ENCODE measurements at regions of chr10 and their contacts with region 1.

Region 1: GRCh38 chr10:74081192-74081803 is 69.3 kb downstream of the AP3M1 start:
- DNase-seq: peak in 1 of 2 experiments; percentile 46
- H3K4me3 ChIP-seq: no peak overlapping the region
- H3K27ac ChIP-seq: peak overlapping the region; percentile 66; the same call in 1 of the 2 replicates
- H3K4me1 ChIP-seq: peaks cover 43% of the 10 kb centered on the region
- H3K27me3 ChIP-seq: no peaks in the 10 kb centered on the region
- CTCF ChIP-seq: peak; percentile 87

Region 2: DNA sequence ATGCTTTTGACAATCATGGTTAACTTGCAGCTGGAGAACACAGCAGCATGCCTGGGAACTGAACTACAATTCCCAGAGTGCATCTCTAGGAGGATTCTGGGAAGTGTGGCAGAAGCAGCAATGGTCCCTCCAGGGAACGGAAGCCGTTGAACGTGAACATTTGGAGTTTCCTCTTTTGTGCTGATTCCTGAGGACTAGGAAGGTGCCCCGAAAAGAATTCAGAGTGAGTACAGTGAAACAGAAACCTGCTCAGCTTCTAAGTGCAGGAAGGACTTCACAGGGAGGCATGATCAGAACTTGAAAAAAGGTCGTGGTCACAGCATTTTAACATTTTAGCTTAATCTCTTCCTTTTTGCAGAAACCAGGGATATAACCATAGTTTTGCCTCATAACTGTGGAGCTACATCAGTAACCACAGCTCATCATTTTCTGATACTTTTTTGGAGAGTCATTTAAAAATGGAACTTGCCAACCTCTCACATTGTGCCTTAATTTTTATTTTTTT is 970.9 kb before region 1 on chr10 and contains the start of gene NUDT13:
- CTCF ChIA-PET with region 1: no interaction called
- POLR2A ChIA-PET with region 1: no interaction called
- intact Hi-C with region 1: no loop called
- DNase-seq: peak; percentile 51 to 54
- H3K4me3 ChIP-seq: peak within 1 kb of the TSS; percentile 59
- H3K27ac ChIP-seq: peak within 1 kb of the TSS; percentile 91
- H3K4me1 ChIP-seq: peaks cover 19% of the 10 kb centered on the region
- H3K27me3 ChIP-seq: no peaks in the 10 kb centered on the region
- CTCF ChIP-seq: no peak
- total RNA-seq, gene NUDT13: 5.2 TPM in 2 replicates

Region 3: DNA sequence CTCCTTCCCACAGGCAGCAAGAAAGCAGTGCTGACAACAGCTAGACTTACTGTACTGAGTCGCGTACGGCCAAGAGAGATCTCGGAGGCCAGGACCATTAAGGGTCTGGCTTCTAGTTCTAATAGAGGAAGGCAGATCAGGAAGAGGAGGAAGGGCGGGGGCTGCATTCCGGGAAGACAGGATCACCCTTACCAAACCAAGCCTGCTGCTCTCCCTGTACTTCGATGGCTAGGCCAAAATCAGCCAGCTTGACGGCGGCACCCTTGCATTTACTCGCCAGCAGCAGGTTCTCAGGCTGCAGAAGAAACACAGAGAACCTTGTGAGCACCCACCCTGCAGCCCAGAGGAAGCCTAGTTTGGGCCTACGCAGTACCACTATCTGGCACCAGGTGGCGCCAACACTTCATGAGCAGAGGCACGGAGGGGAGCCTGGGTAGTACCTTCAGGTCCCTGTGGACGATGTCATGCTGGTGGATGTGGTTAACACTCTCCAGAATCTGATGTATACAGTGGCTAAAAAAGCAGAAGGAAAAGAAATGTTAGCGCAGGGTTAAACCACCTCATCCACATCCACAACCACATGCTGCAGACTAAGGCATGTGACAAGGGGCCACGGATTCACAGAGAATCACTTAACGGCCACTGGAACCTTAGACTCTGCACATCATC is 232.3 kb before region 1 on chr10:
- CTCF ChIA-PET with region 1: no interaction called
- POLR2A ChIA-PET with region 1: interaction called, 37 read pairs
- intact Hi-C with region 1: no loop called
- DNase-seq: peak; percentile 66 to 82
- H3K4me3 ChIP-seq: no peak overlapping the region
- H3K27ac ChIP-seq: no peak overlapping the region
- H3K4me1 ChIP-seq: no peaks in the 10 kb centered on the region
- H3K27me3 ChIP-seq: no peaks in the 10 kb centered on the region
- CTCF ChIP-seq: peak; percentile 100

Region 4: DNA sequence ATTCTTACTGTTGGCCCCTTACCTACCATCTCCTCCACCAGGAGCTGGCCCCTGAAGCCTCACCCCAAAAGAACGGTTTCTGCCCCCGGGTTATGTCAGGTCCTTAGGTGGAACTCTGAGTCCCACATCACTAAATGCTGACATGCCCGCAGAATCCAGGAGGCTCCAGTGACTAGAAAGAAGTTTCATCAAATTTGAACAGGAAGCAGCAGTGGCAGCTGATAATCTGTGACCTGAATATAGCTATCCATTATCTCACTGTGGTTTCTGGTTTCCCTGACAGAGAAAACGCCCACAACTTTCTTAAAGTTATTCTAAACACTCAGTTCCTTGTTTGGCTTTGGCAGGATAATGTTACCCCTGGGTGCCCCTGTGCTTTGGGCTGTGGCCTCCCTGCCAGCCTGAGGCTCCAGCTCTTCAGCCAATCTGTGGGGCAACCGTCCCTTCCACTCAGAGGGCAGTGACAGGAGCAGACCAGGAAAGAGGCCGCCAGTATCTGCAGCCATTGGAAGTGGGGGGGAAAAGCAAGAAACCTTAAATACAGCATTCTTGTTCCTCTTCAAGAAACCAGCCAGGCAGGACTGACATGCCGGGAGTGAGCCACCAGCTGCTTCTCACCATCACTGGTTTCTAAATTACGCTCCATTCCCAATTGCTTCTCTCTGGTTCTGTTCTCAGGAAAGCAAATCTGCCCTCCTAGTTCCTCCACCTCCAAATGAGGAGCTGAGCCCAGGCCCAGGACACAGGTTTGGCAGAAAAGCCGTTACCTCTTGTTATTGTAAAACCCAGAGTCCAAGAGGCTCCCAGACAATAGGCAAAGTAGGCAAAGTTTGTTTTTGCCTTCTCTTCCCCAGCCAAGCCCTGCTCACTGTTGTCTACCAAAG is 124.6 kb before region 1 on chr10:
- CTCF ChIA-PET with region 1: interaction called, 8 read pairs
- POLR2A ChIA-PET with region 1: interaction called, 5 read pairs
- intact Hi-C with region 1: loop called (anchors 5 kb)
- DNase-seq: peak; percentile 85 to 95
- H3K4me3 ChIP-seq: peak overlapping the region; percentile 15; the same call in 1 of the 2 replicates
- H3K27ac ChIP-seq: peak overlapping the region; percentile 89
- H3K4me1 ChIP-seq: peaks cover 44% of the 10 kb centered on the region
- H3K27me3 ChIP-seq: no peaks in the 10 kb centered on the region
- CTCF ChIP-seq: no peak

Region 5: DNA sequence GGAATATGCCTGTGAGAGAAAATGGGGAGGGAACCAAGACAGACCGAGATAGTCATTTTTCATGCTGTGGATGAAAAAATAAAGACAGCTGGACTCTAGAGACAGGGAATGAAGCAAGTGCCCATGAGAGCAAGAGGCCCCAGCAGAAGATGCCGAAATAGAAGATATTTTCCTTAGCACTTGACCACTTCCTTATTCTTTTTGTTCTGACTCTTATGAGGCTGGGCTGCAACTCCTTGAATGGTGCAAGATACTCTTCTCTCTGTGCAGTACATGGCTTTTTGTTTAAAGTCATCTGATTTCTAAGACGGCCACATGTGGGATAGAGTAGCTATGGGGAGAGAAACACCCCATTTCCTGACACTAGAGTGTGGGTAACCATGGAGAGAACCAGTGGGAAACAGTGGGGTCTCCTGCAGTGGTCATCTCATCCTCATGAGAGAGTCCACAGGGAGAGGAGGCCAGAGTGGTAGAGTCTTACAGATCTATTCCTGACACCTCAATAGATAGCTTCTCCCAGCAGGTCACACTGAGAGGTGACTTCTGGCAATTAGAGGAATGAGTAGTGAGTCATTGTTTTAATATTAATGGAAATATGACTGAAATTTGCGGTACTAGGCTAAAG is 101.4 kb before region 1 on chr10:
- CTCF ChIA-PET with region 1: interaction called, 27 read pairs
- POLR2A ChIA-PET with region 1: interaction called, 5 read pairs
- intact Hi-C with region 1: no loop called
- DNase-seq: peak in 1 of 2 experiments; percentile 38
- H3K4me3 ChIP-seq: no peak overlapping the region
- H3K27ac ChIP-seq: no peak overlapping the region
- H3K4me1 ChIP-seq: no peaks in the 10 kb centered on the region
- H3K27me3 ChIP-seq: no peaks in the 10 kb centered on the region
- CTCF ChIP-seq: no peak

Region 6: DNA sequence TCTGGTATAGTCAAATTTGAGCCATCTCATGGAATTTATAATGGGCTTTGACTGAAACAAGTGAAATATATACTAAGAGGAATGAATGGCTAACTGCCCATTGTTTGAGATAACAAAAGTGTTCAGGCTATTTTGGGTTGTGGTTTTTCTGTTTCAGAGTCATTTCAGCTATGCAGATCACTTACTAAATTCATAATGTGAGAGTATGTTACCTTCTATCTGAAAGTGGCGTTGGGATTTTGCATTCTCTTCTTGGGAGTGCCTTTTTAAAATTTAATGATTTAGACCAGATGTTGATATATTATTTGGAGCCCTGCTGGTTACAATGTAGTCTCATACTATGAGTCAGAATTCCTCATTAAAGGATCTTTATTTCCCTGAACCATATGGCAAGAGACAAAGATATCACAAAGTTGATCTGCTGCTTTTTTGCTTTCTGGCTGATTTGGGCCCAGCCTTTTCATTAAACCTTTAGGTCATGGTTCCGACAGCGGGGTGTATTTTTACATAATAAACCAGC is 73.0 kb before region 1 on chr10:
- CTCF ChIA-PET with region 1: no interaction called
- POLR2A ChIA-PET with region 1: no interaction called
- intact Hi-C with region 1: loop called (anchors 5 kb)
- DNase-seq: peak in 1 of 2 experiments; percentile 72
- H3K4me3 ChIP-seq: no peak overlapping the region
- H3K27ac ChIP-seq: peak overlapping the region; percentile 25
- H3K4me1 ChIP-seq: peaks cover 62% of the 10 kb centered on the region
- H3K27me3 ChIP-seq: no peaks in the 10 kb centered on the region
- CTCF ChIP-seq: no peak

Region 7: GRCh38 chr10:74096777-74097176 is 15.5 kb after region 1 on chr10:
- CTCF ChIA-PET with region 1: no interaction called
- POLR2A ChIA-PET with region 1: interaction called, 11 read pairs
- intact Hi-C with region 1: no loop called
- DNase-seq: no peak
- H3K4me3 ChIP-seq: no peak overlapping the region
- H3K27ac ChIP-seq: no peak overlapping the region
- H3K4me1 ChIP-seq: no peaks in the 10 kb centered on the region
- H3K27me3 ChIP-seq: no peaks in the 10 kb centered on the region
- CTCF ChIP-seq: no peak

Measured in PC-9 (cell line).